ENCODE measurements at regions of chr4 and their contacts with region 1.

Region 1: GRCh38 chr4:152500800-152501434 is 35.0 kb downstream of the FBXW7 start:
- DNase-seq: peak; percentile 68
- H3K4me3 ChIP-seq: no peak overlapping the region
- H3K27ac ChIP-seq: no peak overlapping the region
- H3K4me1 ChIP-seq: peaks cover 3% of the 10 kb centered on the region
- H3K27me3 ChIP-seq: no peaks in the 10 kb centered on the region
- CTCF ChIP-seq: peak; percentile 69 to 80

Region 2: DNA sequence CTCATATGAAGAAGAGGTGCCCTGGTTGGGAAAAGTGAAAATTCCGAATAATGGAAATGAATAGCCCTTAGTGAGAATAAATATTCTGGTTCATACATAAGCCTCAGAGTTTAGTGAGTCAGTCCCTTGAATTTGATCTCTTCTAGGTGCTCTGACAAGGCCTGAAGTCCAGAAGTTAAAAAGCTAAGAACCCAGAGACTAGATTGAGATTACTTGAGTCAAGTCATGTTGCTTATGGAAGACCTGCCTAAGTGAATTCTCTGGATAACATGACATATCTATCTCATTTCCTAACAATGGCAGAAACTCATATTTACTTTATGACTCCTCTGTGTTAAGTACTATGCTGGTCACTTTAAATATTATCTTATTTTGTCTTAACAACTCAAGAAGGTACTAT is 1234.4 kb before region 1 on chr4:
- CTCF ChIA-PET with region 1: interaction called, 10 read pairs
- dilution Hi-C with region 1: no loop called
- in situ Hi-C with region 1: no loop called
- intact Hi-C with region 1: no loop called
- DNase-seq: no peak
- H3K4me3 ChIP-seq: no peak overlapping the region
- H3K27ac ChIP-seq: no peak overlapping the region
- H3K4me1 ChIP-seq: peaks cover 3% of the 10 kb centered on the region
- H3K27me3 ChIP-seq: no peaks in the 10 kb centered on the region
- CTCF ChIP-seq: no peak

Region 3: DNA sequence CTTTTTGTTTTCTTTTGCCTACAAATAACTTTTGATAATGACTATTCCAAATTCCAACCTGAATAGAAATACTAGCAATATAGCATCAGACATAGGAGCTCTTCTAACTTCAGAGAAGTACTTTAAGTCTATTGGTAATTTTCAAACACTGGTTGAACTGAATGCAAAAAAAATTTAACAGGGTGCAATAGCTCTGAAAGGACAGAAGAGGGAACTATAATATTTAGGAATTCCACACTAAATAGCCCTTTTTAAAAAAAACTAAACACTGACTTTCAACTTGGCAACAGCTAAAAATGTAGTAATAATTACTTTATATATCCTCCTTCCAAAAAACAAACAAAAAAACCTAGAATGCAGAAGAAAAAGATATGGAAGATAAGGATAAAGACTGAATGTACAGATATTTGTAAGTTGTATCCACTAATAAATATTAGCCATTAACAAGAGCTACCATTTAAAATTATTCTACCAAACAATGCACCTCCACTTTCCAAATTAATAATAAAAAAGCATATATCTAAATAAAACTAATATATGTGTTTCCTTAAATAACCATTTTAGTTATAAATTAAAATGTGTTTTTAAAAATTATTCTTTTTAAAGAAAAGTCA is 46.4 kb before region 1 on chr4:
- CTCF ChIA-PET with region 1: interaction called, 12 read pairs
- dilution Hi-C with region 1: no loop called
- in situ Hi-C with region 1: no loop called
- intact Hi-C with region 1: no loop called
- DNase-seq: peak; percentile 24
- H3K4me3 ChIP-seq: no peak overlapping the region
- H3K27ac ChIP-seq: no peak overlapping the region
- H3K4me1 ChIP-seq: no peaks in the 10 kb centered on the region
- H3K27me3 ChIP-seq: no peaks in the 10 kb centered on the region
- CTCF ChIP-seq: peak; percentile 61 to 78

Region 4: GRCh38 chr4:152535903-152536544 is 35.1 kb after region 1 on chr4 and contains the start of gene FBXW7:
- CTCF ChIA-PET with region 1: interaction called, 6 read pairs
- dilution Hi-C with region 1: no loop called
- in situ Hi-C with region 1: no loop called
- intact Hi-C with region 1: loop called (anchors 1 kb)
- DNase-seq: peak; percentile 99
- H3K4me3 ChIP-seq: peak within 1 kb of the TSS; percentile 78 to 97 (median 85)
- H3K27ac ChIP-seq: peak within 1 kb of the TSS; percentile 88
- H3K4me1 ChIP-seq: peaks cover 16% of the 10 kb centered on the region
- H3K27me3 ChIP-seq: no peaks in the 10 kb centered on the region
- CTCF ChIP-seq: no peak
- total RNA-seq, gene FBXW7: 42.7 to 109 TPM

Region 5: DNA sequence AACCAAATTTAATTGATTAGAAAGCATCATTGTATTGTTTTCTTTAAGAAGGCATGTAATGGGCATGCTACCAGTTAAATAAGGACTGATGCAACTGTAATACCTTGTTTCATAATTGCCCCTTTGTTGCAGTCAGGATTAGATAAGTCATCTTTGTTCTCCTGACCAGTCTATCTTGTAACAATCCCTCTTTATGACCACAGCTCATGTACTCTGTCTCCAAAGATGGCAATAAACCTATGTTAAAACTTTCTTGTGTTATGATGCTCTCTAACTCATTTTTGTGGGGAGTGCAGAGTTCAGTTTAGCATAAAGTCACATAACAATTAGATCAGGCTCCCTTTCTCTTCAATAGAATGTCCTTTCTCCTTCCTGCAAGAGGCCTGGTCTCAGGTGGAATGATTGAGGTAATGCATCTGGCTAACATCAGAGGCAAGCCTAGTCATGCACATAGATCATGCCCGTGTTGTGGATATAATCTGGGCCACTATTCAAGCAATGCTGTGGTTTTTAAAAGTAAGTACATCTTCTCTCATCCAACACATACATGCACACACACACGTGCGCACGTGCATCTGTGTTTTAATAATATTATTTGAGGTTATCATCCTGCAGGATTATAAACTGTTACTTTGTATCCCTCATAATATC is 133.3 kb after region 1 on chr4:
- CTCF ChIA-PET with region 1: interaction called, 5 read pairs
- dilution Hi-C with region 1: no loop called
- in situ Hi-C with region 1: loop called (anchors 10 kb)
- intact Hi-C with region 1: no loop called
- DNase-seq: peak; percentile 90
- H3K4me3 ChIP-seq: no peak overlapping the region
- H3K27ac ChIP-seq: peak overlapping the region; percentile 92
- H3K4me1 ChIP-seq: peaks cover 28% of the 10 kb centered on the region
- H3K27me3 ChIP-seq: no peaks in the 10 kb centered on the region
- CTCF ChIP-seq: no peak

Region 6: GRCh38 chr4:152640058-152640833 is 139.3 kb after region 1 on chr4:
- CTCF ChIA-PET with region 1: interaction called, 5 read pairs
- dilution Hi-C with region 1: no loop called
- in situ Hi-C with region 1: loop called (anchors 10 kb)
- intact Hi-C with region 1: loop called (anchors 1 kb)
- DNase-seq: no peak
- H3K4me3 ChIP-seq: no peak overlapping the region
- H3K27ac ChIP-seq: no peak overlapping the region
- H3K4me1 ChIP-seq: peaks cover 2% of the 10 kb centered on the region
- H3K27me3 ChIP-seq: no peaks in the 10 kb centered on the region
- CTCF ChIP-seq: peak; percentile 41 to 56